Activated T-helper 2 cell treated with anti-CD3 and anti-CD28 coated beads, Interferon-gamma antibody, Interleukin-2, Interleukin-4, amounts not matched to agents 10 μg/mL and 5 μg/mL and 100 μg/mL, durations not matched to agents 14 hours and 24 hours and 36 hours (primary cell): ENCODE measurements at regions of chr3 and their contacts with region 1.

Region 1: GRCh38 chr3:71456156-71456555 is 127.4 kb downstream of the FOXP1 start:
- DNase-seq: no peak
- H3K4me3 Mint-ChIP-seq: peak overlapping the region; percentile 70
- H3K27ac Mint-ChIP-seq: peak overlapping the region; percentile 89
- H3K4me1 Mint-ChIP-seq: peaks cover 85% of the 10 kb centered on the region
- H3K27me3 Mint-ChIP-seq: no peaks in the 10 kb centered on the region

Region 2: DNA sequence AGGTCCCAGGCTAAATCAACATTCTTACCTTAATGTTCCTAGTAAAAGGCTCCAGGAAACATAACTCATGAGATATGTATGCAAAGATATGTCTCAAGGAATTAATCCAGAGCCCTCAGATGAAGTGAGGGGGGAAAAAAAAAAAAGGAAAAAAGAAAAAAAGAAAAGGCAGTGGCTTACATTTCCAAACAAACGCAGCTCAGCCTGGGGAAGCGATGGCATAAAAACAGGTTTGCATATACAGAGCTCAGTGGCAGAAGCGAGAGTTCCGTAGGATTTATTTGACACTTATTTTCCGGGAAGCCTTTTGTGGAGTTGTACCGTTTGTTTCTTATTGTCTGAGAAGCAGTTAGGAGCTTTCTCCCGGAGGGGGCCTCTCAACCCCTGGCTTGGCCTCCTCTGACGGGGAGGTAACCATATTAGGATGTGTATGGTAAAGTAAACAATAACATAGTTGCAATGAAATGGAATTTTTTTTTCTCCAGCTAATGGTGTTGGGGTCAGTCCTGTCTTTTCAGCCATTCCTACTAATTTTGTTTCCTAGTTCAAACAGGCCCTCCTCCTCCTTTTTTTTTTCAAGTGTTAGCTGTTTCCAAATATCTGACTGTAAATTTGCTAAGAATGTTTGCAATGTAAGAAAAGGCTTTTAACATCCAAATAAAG is 211.2 kb before region 1 on chr3:
- intact Hi-C with region 1: no loop called
- DNase-seq: no peak
- H3K4me3 Mint-ChIP-seq: no peak overlapping the region
- H3K27ac Mint-ChIP-seq: no peak overlapping the region
- H3K4me1 Mint-ChIP-seq: peaks cover 25% of the 10 kb centered on the region
- H3K27me3 Mint-ChIP-seq: no peaks in the 10 kb centered on the region

Region 3: DNA sequence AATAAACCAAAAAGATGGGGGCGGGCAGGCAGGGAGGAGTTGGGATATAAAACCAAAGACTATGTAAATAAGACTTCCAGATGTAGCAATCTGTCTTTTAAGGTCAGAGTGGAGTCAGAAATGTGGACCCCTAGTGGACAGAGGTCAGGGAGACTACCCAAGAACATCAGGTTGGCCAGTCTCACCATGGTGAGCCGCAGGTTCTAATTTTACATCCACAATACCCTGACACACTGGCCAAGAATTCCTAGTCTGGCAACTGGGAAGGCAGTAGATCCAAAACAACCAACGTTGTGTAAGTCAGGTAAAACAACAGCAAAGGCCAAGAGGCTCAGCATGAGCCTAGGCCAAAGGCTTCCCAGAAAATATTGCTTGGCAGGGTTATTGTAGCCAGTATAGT is 76.1 kb before region 1 on chr3:
- intact Hi-C with region 1: loop called (anchors 5 kb)
- DNase-seq: no peak
- H3K4me3 Mint-ChIP-seq: no peak overlapping the region
- H3K27ac Mint-ChIP-seq: peak overlapping the region; percentile 68
- H3K4me1 Mint-ChIP-seq: peaks cover 56% of the 10 kb centered on the region
- H3K27me3 Mint-ChIP-seq: no peaks in the 10 kb centered on the region

Region 4: GRCh38 chr3:71397046-71397445 is 59.1 kb before region 1 on chr3:
- intact Hi-C with region 1: no loop called
- DNase-seq: no peak
- H3K4me3 Mint-ChIP-seq: no peak overlapping the region
- H3K27ac Mint-ChIP-seq: no peak overlapping the region
- H3K4me1 Mint-ChIP-seq: peaks cover 47% of the 10 kb centered on the region
- H3K27me3 Mint-ChIP-seq: peaks cover 10% of the 10 kb centered on the region

Region 5: GRCh38 chr3:71423151-71423906 is 32.8 kb before region 1 on chr3:
- intact Hi-C with region 1: loop called (anchors 2 kb)
- DNase-seq: no peak
- H3K4me3 Mint-ChIP-seq: no peak overlapping the region
- H3K27ac Mint-ChIP-seq: peak overlapping the region; percentile 83
- H3K4me1 Mint-ChIP-seq: peaks cover 61% of the 10 kb centered on the region
- H3K27me3 Mint-ChIP-seq: no peaks in the 10 kb centered on the region

Region 6: GRCh38 chr3:71444028-71444860 is 11.9 kb before region 1 on chr3:
- intact Hi-C with region 1: loop called (anchors 1 kb)
- DNase-seq: peak; percentile 79
- H3K4me3 Mint-ChIP-seq: peak overlapping the region; percentile 71
- H3K27ac Mint-ChIP-seq: peak overlapping the region; percentile 99
- H3K4me1 Mint-ChIP-seq: peaks cover 86% of the 10 kb centered on the region
- H3K27me3 Mint-ChIP-seq: no peaks in the 10 kb centered on the region

Region 7: GRCh38 chr3:71478568-71478967 is 22.4 kb after region 1 on chr3:
- intact Hi-C with region 1: loop called (anchors 2 kb)
- DNase-seq: peak; percentile 48
- H3K4me3 Mint-ChIP-seq: no peak overlapping the region
- H3K27ac Mint-ChIP-seq: peak overlapping the region; percentile 85
- H3K4me1 Mint-ChIP-seq: peaks cover 40% of the 10 kb centered on the region
- H3K27me3 Mint-ChIP-seq: no peaks in the 10 kb centered on the region

Region 8: DNA sequence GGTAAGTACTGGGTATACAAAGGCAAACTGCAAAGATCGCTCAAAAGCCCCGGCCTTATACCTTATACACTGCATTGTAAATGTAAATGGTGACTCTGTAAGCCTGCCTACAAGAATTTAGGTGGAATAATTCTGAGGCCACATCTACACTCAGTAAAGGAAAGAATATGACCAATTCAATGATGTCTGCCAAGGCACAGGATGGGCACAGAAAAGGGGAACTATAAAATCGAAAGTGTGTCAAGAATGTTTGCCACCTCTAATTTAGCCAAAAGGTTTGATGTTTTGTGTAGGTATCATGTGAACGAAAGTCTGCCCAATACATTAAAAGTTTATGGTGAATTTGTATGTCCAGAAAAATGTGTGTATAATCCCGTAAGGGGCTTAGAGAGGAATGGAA is 31.3 kb after region 1 on chr3:
- intact Hi-C with region 1: loop called (anchors 1 kb)
- DNase-seq: no peak
- H3K4me3 Mint-ChIP-seq: peak overlapping the region; percentile 71
- H3K27ac Mint-ChIP-seq: peak overlapping the region; percentile 91
- H3K4me1 Mint-ChIP-seq: peaks cover 71% of the 10 kb centered on the region
- H3K27me3 Mint-ChIP-seq: no peaks in the 10 kb centered on the region